Mammary epithelial cell (primary cell): ENCODE measurements at regions of chr15 and their contacts with region 1.

Region 1: DNA sequence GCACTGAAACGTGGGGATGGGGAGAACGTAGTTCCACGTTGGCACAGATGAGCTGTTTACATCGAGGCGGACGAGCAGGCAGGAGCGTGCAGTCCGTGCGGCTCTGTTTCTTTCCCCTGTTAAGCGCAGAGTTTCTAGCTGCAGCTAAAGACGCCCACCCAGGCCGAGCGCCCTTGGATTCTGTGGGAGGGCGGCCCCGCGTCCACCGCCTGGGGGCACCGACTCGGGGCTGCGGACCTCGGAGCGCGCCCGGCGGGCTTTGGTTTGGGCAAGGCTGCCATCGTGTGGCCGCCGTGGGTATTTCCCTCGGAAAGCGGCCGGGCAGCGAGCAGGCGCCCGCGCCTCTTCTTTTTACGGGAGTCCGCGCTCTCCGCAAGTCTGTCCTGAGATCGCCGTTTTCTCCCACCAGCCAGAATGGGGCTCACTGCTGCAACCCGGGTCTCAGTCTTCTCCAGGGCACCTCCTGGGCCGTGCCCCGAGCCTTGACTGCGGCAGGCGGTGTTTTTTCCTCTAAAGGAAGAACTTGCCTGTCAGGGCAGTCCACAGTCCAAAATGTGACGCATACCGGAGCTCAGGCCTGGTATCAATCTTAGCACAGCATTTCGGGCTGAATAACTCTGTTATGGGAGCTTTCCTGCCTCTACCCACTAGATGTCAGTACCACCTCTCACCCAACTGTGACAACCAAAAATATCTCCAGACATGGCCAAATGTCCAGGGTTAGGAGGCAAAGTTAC is 219.9 kb upstream of the IGF1R start:
- DNase-seq: peak; percentile 74
- H3K4me3 ChIP-seq: peak overlapping the region; percentile 23 to 56 (median 54)
- H3K27ac ChIP-seq: no peak overlapping the region
- H3K4me1 ChIP-seq: no peaks in the 10 kb centered on the region
- H3K27me3 ChIP-seq: peaks cover 6% of the 10 kb centered on the region
- CTCF ChIP-seq: peak; percentile 46 to 74

Region 2: DNA sequence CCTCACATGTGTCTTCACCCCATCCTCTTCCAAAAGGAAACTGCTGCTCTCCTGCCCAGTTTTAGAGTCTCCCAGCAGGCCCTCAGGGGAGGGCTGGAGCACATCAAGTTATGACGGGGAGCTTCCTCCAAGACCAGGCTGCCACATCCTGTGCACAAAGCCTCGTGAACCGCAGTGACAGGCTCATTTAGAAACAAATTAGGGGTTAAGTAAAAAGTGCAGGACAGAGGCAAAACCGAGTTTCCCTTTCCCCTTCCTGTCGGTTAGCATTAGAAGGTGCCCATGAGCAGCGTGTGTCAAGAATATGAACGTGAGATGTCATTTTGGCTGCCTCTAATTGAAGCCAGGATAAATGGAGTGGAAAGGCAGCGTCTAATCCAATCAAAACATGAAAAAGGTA is 268.2 kb before region 1 on chr15:
- CTCF ChIA-PET with region 1: no interaction called
- dilution Hi-C with region 1: no loop called
- in situ Hi-C with region 1: no loop called
- intact Hi-C with region 1: no loop called
- DNase-seq: no peak
- H3K4me3 ChIP-seq: no peak overlapping the region
- H3K27ac ChIP-seq: no peak overlapping the region
- H3K4me1 ChIP-seq: peaks cover 26% of the 10 kb centered on the region
- H3K27me3 ChIP-seq: no peaks in the 10 kb centered on the region
- CTCF ChIP-seq: no peak

Region 3: GRCh38 chr15:98311566-98312188 is 116.7 kb before region 1 on chr15:
- CTCF ChIA-PET with region 1: interaction called, 8 read pairs
- dilution Hi-C with region 1: no loop called
- in situ Hi-C with region 1: no loop called
- intact Hi-C with region 1: loop called (anchors 2 kb)
- DNase-seq: peak; percentile 62
- H3K4me3 ChIP-seq: no peak overlapping the region
- H3K27ac ChIP-seq: no peak overlapping the region
- H3K4me1 ChIP-seq: no peaks in the 10 kb centered on the region
- H3K27me3 ChIP-seq: no peaks in the 10 kb centered on the region
- CTCF ChIP-seq: peak; percentile 77 to 84

Region 4: DNA sequence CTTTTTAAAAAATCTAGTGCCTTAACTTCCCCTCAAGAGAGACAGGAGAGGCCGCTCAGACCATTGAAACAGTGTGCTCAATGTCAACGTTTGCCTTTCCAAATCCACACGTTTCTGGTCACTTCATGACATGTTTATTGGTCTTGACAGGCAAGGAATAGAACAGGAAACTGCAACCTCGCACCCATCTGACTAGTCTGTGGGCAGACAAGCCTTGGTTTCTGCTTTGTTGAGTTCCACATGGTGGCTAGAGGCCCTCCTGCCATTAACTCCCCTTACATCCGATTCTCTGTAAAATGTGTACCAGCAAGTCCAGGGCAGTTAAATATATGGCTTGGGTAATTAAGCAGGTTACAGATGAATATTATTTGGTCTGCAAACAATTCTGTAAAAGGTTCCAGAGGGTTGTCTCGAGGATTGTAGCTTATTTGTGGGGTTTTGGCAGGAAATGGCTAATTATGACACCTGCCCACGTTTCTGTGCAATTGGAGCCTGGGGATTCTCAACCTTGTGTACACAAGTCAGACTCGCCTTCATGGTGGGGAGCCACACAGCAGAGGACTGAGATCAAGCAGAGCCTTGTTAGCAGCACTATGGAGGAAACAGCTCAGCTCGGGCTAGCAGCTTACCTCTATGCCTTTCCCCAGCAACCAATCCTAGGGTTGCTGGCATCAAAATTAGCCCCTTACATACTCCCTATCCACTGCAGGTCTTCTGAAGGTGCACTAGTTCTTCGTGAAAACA is 97.6 kb before region 1 on chr15:
- CTCF ChIA-PET with region 1: no interaction called
- dilution Hi-C with region 1: loop called (anchors 5 kb)
- in situ Hi-C with region 1: no loop called
- intact Hi-C with region 1: no loop called
- DNase-seq: no peak
- H3K4me3 ChIP-seq: no peak overlapping the region
- H3K27ac ChIP-seq: no peak overlapping the region
- H3K4me1 ChIP-seq: no peaks in the 10 kb centered on the region
- H3K27me3 ChIP-seq: peaks cover 7% of the 10 kb centered on the region
- CTCF ChIP-seq: no peak

Region 5: GRCh38 chr15:98620020-98620419 is 191.6 kb after region 1 on chr15:
- CTCF ChIA-PET with region 1: no interaction called
- dilution Hi-C with region 1: no loop called
- in situ Hi-C with region 1: no loop called
- intact Hi-C with region 1: no loop called
- DNase-seq: no peak
- H3K4me3 ChIP-seq: no peak overlapping the region
- H3K27ac ChIP-seq: no peak overlapping the region
- H3K4me1 ChIP-seq: peaks cover 2% of the 10 kb centered on the region
- H3K27me3 ChIP-seq: peaks cover 2% of the 10 kb centered on the region
- CTCF ChIP-seq: no peak